Ascending aorta (tissue), 2 donors: ENCODE measurements at regions of chr15 and their contacts with region 1.

Region 1: GRCh38 chr15:89119489-89120123 is 31.4 kb downstream of the ABHD2 start:
- DNase-seq: peak in 1 of 2 donors; percentile 85
- H3K4me3 ChIP-seq: no peak overlapping the region
- H3K27ac ChIP-seq: peak overlapping the region; percentile 93 to 96
- H3K4me1 ChIP-seq: peaks cover 14 to 73% of the 10 kb centered on the region in 2 donors
- H3K27me3 ChIP-seq: no peaks in the 10 kb centered on the region
- CTCF ChIP-seq: no peak

Region 2: GRCh38 chr15:89101302-89102191 is 18.1 kb before region 1 on chr15:
- intact Hi-C with region 1: loop called (anchors 1 kb)
- DNase-seq: peak; percentile 73 to 96
- H3K4me3 ChIP-seq: no peak overlapping the region
- H3K27ac ChIP-seq: peak overlapping the region; percentile 96 to 98
- H3K4me1 ChIP-seq: peaks cover 24 to 89% of the 10 kb centered on the region in 2 donors
- H3K27me3 ChIP-seq: no peaks in the 10 kb centered on the region
- CTCF ChIP-seq: no peak

Region 3: GRCh38 chr15:89139400-89140166 is 20.0 kb after region 1 on chr15:
- intact Hi-C with region 1: loop called (anchors 2 kb)
- DNase-seq: no peak
- H3K4me3 ChIP-seq: no peak overlapping the region
- H3K27ac ChIP-seq: peak overlapping the region; percentile 92 to 96
- H3K4me1 ChIP-seq: peaks cover 57 to 84% of the 10 kb centered on the region in 2 donors
- H3K27me3 ChIP-seq: no peaks in the 10 kb centered on the region
- CTCF ChIP-seq: peak in 2 of 3 experiments; percentile 9 to 10

Region 4: DNA sequence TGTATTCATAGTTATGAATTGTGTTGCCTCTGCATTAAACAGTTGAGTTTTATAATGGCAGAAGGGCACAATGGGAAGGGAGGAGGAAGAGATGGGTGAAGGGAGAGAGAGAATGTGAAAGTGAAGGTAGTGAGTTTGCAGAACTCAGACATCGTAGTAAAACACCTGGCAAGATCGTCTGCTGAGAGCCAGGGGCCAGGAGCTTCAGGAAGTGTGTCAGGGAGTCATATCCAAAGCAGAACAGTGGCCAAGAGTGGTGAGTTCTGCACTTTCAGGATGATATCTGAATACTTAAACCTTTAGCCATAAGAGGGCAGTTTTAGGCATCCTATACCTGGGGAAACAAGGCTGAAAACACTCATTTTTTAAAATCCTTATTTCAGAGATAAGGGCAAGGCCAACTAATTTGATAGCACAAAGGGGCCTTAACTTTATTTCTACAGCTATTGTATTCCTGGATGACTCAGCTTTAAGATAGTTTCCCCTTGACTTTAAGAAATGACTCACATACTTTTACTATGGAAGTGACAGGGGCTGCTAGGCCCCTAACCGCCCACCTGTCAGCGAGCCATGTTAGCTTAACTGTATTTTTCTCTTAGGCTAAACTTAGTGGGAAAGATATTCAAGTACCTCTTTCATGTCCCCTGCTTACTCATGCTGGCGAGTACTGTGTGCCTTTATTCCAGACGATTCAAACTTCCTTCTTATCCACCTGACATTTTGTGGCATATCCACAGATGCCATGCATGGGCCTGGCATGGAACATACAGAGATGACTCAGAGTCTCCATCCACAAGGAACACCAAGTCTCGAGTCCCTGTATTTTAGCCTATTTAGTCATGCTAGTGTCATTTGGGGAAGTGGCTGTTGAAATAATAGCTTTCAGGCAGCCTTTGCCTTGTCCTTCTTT is 47.9 kb after region 1 on chr15:
- intact Hi-C with region 1: loop called (anchors 5 kb)
- DNase-seq: peak; percentile 59 to 85
- H3K4me3 ChIP-seq: no peak overlapping the region
- H3K27ac ChIP-seq: peak overlapping the region; percentile 83 to 86
- H3K4me1 ChIP-seq: peaks cover 12 to 39% of the 10 kb centered on the region in 2 donors
- H3K27me3 ChIP-seq: no peaks in the 10 kb centered on the region
- CTCF ChIP-seq: no peak

Region 5: DNA sequence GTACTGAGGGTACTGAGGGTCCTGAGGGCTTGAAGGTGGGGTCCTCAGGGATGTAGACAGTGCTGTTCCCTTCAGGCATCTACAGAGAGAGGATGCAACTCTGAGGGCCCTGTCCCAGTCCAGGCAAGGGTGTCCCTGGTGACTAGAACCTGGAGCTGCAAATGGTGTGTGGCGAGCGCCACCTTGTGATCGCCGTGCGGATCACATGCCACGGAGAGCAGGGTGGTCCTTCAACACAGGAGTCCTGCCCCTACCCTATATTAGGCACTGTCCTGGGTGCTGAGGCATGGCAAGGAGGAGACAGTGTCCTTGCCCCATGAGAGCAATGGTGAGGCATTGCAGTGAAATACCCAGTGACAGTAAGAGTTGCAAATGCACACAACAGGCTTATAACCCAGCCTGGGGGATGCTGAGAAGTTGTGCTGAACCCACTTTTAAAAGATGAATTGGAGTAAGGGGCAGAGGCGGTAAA is 353.2 kb after region 1 on chr15:
- intact Hi-C with region 1: no loop called
- DNase-seq: no peak
- H3K4me3 ChIP-seq: no peak overlapping the region
- H3K27ac ChIP-seq: no peak overlapping the region
- H3K4me1 ChIP-seq: no peaks in the 10 kb centered on the region
- H3K27me3 ChIP-seq: peaks cover 9% of the 10 kb centered on the region
- CTCF ChIP-seq: peak in 1 of 3 experiments; percentile 31